Aorta (tissue), 5 donors: ENCODE measurements at regions of chr21 and their contacts with region 1.

Region 1: GRCh38 chr21:37281993-37282392 is 14.9 kb upstream of the VPS26C start:
- DNase-seq: peak in 1 of 2 donors; percentile 45
- ATAC-seq: no peak
- H3K4me3 ChIP-seq: no peak overlapping the region
- H3K27ac ChIP-seq: no peak overlapping the region
- H3K4me1 ChIP-seq: no peaks in the 10 kb centered on the region
- H3K27me3 ChIP-seq: no peaks in the 10 kb centered on the region

Region 2: GRCh38 chr21:37232274-37233018 is 49.5 kb before region 1 on chr21:
- intact Hi-C with region 1: no loop called
- DNase-seq: no peak
- ATAC-seq: no peak
- H3K4me3 ChIP-seq: no peak overlapping the region
- H3K27ac ChIP-seq: no peak overlapping the region
- H3K4me1 ChIP-seq: no peaks in the 10 kb centered on the region
- H3K27me3 ChIP-seq: no peaks in the 10 kb centered on the region

Region 3: DNA sequence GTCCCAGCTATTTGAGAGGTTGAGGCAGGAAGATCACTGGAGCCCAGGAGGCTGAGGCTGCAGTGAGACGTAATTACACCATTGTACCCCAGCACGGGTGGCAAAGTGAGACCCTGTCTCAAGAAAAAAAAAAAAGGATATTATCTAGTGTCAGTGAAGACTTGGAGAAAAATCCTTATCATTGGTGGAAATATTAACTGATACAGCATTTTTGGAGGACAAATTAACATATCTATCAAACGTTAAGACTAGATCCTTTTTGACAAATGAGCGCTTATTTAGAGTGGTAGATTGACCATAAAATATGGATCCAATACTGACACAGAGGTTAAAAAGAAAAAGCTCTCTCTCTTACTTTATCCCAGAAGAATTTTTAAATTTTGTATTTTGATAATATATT is 49.4 kb after region 1 on chr21:
- intact Hi-C with region 1: loop called in 1 of 2 experiments (anchors 5 kb)
- DNase-seq: no peak
- ATAC-seq: no peak
- H3K4me3 ChIP-seq: no peak overlapping the region
- H3K27ac ChIP-seq: no peak overlapping the region
- H3K4me1 ChIP-seq: no peaks in the 10 kb centered on the region
- H3K27me3 ChIP-seq: no peaks in the 10 kb centered on the region

Region 4: GRCh38 chr21:37398697-37399096 is 116.7 kb after region 1 on chr21:
- intact Hi-C with region 1: no loop called
- DNase-seq: no peak
- ATAC-seq: no peak
- H3K4me3 ChIP-seq: no peak overlapping the region
- H3K27ac ChIP-seq: no peak overlapping the region
- H3K4me1 ChIP-seq: peaks cover under 1 to 11% of the 10 kb centered on the region in 2 donors
- H3K27me3 ChIP-seq: no peaks in the 10 kb centered on the region